Dendritic cell treated with granulocyte-macrophage colony-stimulating factor and Interleukin-4, amounts not matched to agents 40 ng/mL and 50 ng/mL, for 4 days (primary cell): ENCODE measurements at regions of chr13 and their contacts with region 1.

Region 1: GRCh38 chr13:95834134-95834765 is 157.3 kb downstream of the DNAJC3 start:
- H3K4me3 Mint-ChIP-seq: no peak overlapping the region
- H3K27ac Mint-ChIP-seq: no peak overlapping the region
- H3K4me1 Mint-ChIP-seq: no peaks in the 10 kb centered on the region
- H3K27me3 Mint-ChIP-seq: no peaks in the 10 kb centered on the region

Region 2: GRCh38 chr13:95181586-95181985 is 652.7 kb before region 1 on chr13:
- intact Hi-C with region 1: loop called (anchors 10 kb)
- H3K4me3 Mint-ChIP-seq: no peak overlapping the region
- H3K27ac Mint-ChIP-seq: peak overlapping the region; percentile 42
- H3K4me1 Mint-ChIP-seq: peaks cover 37% of the 10 kb centered on the region
- H3K27me3 Mint-ChIP-seq: no peaks in the 10 kb centered on the region

Region 3: DNA sequence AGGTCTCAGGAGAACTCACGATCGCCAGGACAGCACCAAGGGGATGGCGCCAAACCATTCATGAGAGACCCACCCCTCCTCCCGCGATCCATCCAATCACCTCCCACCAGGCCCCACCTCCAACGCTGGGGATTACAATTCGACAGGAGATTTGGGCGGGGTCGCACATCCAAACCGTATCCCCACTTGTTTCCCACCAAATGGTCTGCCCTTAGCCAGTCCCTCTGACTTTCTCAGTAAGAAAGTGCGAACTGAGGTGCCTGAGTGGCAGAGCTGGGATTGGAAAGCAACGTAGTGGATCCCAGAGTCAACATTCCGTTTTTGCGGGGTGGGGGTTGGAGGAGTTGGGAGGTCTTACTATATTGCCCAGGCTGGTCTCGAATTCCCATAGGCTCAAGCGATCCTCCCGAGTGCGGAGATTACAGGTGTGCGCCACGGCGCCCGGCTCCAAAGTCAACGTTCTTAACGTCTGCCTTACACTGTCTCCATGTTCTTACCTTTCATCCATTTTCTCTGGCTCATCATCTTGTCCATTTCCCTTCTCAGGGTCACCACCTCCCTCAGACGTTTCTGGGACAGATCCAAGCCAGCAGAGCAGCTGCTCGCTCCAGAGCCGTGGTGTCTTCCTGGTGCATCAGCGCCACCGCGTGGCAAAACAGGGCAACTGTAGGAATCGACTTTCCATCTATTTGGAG is 430.3 kb before region 1 on chr13:
- intact Hi-C with region 1: loop called (anchors 10 kb)
- H3K4me3 Mint-ChIP-seq: peak overlapping the region; percentile 58
- H3K27ac Mint-ChIP-seq: no peak overlapping the region
- H3K4me1 Mint-ChIP-seq: peaks cover 19% of the 10 kb centered on the region
- H3K27me3 Mint-ChIP-seq: peaks cover 17% of the 10 kb centered on the region

Region 4: DNA sequence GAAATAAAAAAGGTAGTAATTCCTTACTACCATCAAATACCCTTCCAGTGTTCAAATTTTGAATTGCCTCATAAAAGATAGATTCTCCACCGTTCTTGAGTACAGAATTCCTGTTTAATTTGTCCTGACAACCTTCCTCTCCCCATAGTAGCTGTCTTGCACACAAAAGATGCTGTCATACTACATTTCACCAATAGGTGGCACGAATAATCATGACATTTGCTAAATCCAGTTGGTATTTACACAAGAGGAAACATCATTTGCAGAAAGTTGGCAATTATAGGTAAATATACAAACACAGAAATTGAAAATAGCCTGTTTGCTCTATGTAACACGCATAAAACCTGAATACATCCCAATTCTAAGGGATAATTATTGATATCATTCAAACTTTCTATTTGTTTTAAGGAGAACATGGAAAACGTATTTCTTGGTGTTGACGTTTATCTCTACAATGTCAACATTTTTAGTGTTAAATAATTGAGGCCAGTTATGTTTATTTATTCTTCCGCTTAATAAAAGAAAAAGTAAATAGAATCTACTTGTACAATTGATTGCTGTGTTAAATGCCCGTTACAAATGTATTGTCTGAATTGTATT is 340.1 kb before region 1 on chr13:
- intact Hi-C with region 1: loop called (anchors 10 kb)
- H3K4me3 Mint-ChIP-seq: no peak overlapping the region
- H3K27ac Mint-ChIP-seq: no peak overlapping the region
- H3K4me1 Mint-ChIP-seq: peaks cover 30% of the 10 kb centered on the region
- H3K27me3 Mint-ChIP-seq: no peaks in the 10 kb centered on the region

Region 5: GRCh38 chr13:95536632-95537241 is 297.5 kb before region 1 on chr13:
- intact Hi-C with region 1: loop called (anchors 1 kb)
- H3K4me3 Mint-ChIP-seq: no peak overlapping the region
- H3K27ac Mint-ChIP-seq: no peak overlapping the region
- H3K4me1 Mint-ChIP-seq: peaks cover 19% of the 10 kb centered on the region
- H3K27me3 Mint-ChIP-seq: no peaks in the 10 kb centered on the region

Region 6: DNA sequence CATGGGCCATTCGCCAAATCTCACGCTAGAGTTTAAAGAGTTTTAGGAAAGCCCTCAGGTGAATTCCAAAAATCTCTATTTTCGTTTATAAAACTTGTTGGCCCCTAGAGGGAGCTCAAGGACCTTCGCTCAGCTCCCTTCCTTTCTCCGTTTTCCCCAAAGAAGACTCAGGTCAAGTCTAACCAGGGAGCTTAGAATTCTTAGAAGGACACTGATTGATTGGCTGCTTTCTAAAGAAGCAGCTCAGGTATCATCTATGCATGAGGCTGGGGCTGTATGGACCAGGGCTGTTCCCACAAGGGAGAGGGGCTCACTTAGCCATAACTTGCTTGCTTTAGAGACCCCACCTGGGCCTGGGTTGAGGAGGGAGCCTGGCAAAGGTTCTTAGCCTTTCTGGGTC is 210.2 kb before region 1 on chr13:
- intact Hi-C with region 1: loop called (anchors 1 kb)
- H3K4me3 Mint-ChIP-seq: no peak overlapping the region
- H3K27ac Mint-ChIP-seq: no peak overlapping the region
- H3K4me1 Mint-ChIP-seq: peaks cover 13% of the 10 kb centered on the region
- H3K27me3 Mint-ChIP-seq: peaks cover 3% of the 10 kb centered on the region

Region 7: GRCh38 chr13:95660981-95661581 is 173.2 kb before region 1 on chr13:
- intact Hi-C with region 1: loop called (anchors 1 kb)
- H3K4me3 Mint-ChIP-seq: no peak overlapping the region
- H3K27ac Mint-ChIP-seq: no peak overlapping the region
- H3K4me1 Mint-ChIP-seq: no peaks in the 10 kb centered on the region
- H3K27me3 Mint-ChIP-seq: no peaks in the 10 kb centered on the region

Region 8: DNA sequence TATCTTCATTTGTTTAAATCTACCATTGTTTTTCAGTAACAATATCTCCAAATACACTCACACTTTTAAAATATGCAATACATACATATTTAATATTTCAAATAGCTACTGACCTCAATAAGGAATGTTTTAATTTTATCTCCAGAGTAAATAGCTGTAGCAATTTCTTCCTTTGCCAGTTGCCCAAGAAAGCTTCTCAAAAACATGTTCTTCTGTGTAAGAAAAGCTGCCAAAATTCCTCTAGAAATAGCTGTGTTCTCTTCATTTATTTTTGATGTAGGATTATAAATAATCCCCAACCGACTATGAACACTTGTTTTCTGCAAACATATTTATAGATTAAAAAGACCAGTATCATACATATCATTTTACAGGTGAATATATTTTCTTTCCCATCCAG is 68.5 kb after region 1 on chr13:
- intact Hi-C with region 1: no loop called
- H3K4me3 Mint-ChIP-seq: no peak overlapping the region
- H3K27ac Mint-ChIP-seq: no peak overlapping the region
- H3K4me1 Mint-ChIP-seq: no peaks in the 10 kb centered on the region
- H3K27me3 Mint-ChIP-seq: no peaks in the 10 kb centered on the region